ENCODE measurements at regions of chr1 and their contacts with region 1.

Region 1: DNA sequence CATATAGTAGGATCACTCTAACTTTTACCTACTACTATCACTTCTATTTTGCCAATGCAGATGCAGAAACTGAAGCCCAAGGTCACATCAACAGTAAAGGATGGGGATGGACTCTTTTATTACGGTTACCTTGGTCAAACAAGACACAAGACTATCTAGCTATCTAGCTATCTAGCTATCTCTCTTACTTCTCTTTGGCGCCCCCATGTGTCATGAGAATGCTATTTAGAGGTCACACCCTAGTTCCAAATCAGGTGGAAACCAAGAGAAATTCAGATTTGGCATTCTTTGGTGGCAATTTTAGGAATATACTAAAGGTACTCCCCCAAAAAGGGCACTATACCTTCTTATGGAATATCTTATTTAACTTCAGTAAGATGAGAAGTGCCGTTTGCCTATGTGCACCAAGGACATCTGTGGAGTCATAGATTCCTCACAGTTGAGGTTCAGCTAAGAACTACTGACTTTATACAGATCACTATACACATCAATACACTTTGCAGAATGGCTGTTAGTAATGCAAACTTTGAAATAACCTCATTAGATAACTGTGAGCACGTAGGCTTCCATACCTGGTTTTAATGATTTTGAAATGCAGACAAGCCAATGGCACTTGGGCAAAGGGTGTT is 6.7 kb downstream of the ZNF648 start:
- DNase-seq: peak; percentile 8
- ATAC-seq: peak; percentile 92
- H3K4me3 ChIP-seq: no peak overlapping the region
- H3K27ac ChIP-seq: no peak overlapping the region
- H3K4me1 ChIP-seq: no peaks in the 10 kb centered on the region
- H3K27me3 ChIP-seq: peaks cover 3 to 5% of the 10 kb centered on the region in 2 experiments; a peak in 3 of 4 replicates
- CTCF ChIP-seq: peak; percentile 64 to 72 (median 71); a peak in 5 of 6 replicates
- EP300 ChIP-seq: no peak
- POLR2A ChIP-seq: no peak
- RAD21 ChIP-seq: peak; percentile 83

Region 2: GRCh38 chr1:181189691-181190363 is 865.0 kb before region 1 on chr1:
- CTCF ChIA-PET with region 1: interaction called, 4 read pairs
- POLR2A ChIA-PET with region 1: no interaction called
- RAD21 ChIA-PET with region 1: interaction called, 7 read pairs
- SMC1A ChIA-PET with region 1: interaction called, 4 read pairs
- in situ Hi-C with region 1: no loop called
- intact Hi-C with region 1: loop called (anchors 10 kb)
- DNase-seq: no peak
- ATAC-seq: peak; percentile 98
- H3K4me3 ChIP-seq: no peak overlapping the region
- H3K27ac ChIP-seq: no peak overlapping the region
- H3K4me1 ChIP-seq: no peaks in the 10 kb centered on the region
- H3K27me3 ChIP-seq: no peaks in the 10 kb centered on the region
- CTCF ChIP-seq: peak; percentile 95 to 98 (median 97)
- EP300 ChIP-seq: no peak
- POLR2A ChIP-seq: no peak
- RAD21 ChIP-seq: peak; percentile 99

Region 3: DNA sequence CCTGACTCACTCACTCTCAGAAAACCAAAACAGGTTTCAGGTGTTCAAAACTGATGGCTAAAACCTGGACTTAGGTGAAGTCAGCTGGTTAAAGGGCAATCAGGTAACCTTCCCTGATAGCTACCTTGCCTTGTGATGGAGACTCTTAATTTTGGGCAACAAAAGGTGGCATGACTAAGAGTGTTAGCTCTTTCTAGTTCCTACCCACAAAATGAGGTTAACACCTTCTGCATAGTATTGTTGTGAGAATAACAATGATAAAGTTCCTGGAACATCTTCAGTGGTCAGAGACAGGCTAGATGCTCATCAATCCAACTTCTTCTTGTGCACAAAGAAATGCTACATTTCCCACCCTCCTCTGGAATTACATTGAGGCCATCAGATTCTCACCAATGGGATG is 208.1 kb before region 1 on chr1:
- CTCF ChIA-PET with region 1: no interaction called
- POLR2A ChIA-PET with region 1: no interaction called
- RAD21 ChIA-PET with region 1: no interaction called
- SMC1A ChIA-PET with region 1: no interaction called
- in situ Hi-C with region 1: no loop called
- intact Hi-C with region 1: no loop called
- DNase-seq: no peak
- ATAC-seq: no peak
- H3K4me3 ChIP-seq: no peak overlapping the region
- H3K27ac ChIP-seq: no peak overlapping the region
- H3K4me1 ChIP-seq: no peaks in the 10 kb centered on the region
- H3K27me3 ChIP-seq: no peaks in the 10 kb centered on the region
- CTCF ChIP-seq: no peak
- EP300 ChIP-seq: no peak
- POLR2A ChIP-seq: no peak
- RAD21 ChIP-seq: no peak

Region 4: DNA sequence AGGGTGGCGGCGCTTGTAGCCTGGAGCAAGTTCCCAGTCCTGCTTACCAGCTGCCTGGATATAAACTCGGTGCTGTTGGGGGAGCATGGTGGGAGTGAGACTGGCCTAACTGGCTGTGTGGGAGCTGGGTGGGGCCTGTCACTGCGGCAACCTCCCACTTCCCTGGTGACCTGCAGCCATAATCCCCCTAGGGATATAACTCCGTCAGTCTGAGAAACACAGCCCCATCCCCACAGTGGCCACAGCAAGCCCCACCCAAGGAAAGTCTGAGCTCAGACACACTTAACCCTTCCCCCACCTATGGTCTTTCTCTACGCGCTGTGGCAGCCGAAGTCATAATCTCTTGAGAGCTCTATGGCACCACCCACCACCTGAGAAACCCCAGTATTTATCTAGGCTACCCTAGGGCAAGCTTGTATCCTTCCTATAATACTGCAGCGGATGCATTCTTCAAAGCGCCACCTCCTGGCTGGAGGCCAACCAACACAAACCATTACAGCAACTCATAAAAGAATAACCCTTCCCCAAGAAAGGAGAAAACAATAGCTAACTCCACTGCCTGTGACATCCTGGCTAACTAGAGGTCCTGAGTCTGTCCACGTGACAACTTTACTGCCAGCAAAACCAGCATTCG is 50.7 kb before region 1 on chr1:
- CTCF ChIA-PET with region 1: interaction called, 11 read pairs
- POLR2A ChIA-PET with region 1: no interaction called
- RAD21 ChIA-PET with region 1: no interaction called
- SMC1A ChIA-PET with region 1: interaction called, 3 read pairs
- in situ Hi-C with region 1: no loop called
- intact Hi-C with region 1: no loop called
- DNase-seq: no peak
- ATAC-seq: no peak
- H3K4me3 ChIP-seq: no peak overlapping the region
- H3K27ac ChIP-seq: no peak overlapping the region
- H3K4me1 ChIP-seq: no peaks in the 10 kb centered on the region
- H3K27me3 ChIP-seq: no peaks in the 10 kb centered on the region
- CTCF ChIP-seq: no peak
- EP300 ChIP-seq: no peak
- POLR2A ChIP-seq: no peak
- RAD21 ChIP-seq: no peak

Region 5: GRCh38 chr1:182029379-182030331 is 25.2 kb before region 1 on chr1:
- CTCF ChIA-PET with region 1: interaction called, 58 read pairs
- POLR2A ChIA-PET with region 1: interaction called, 4 read pairs
- RAD21 ChIA-PET with region 1: interaction called, 9 read pairs
- SMC1A ChIA-PET with region 1: interaction called, 4 read pairs
- in situ Hi-C with region 1: no loop called
- intact Hi-C with region 1: no loop called
- DNase-seq: peak; percentile 83
- ATAC-seq: peak; percentile 97
- H3K4me3 ChIP-seq: peak overlapping the region; percentile 83
- H3K27ac ChIP-seq: peak overlapping the region; percentile 66
- H3K4me1 ChIP-seq: no peaks in the 10 kb centered on the region
- H3K27me3 ChIP-seq: no peaks in the 10 kb centered on the region
- CTCF ChIP-seq: peak; percentile 20 to 44 (median 30); a peak in 3 of 6 replicates
- EP300 ChIP-seq: no peak; a peak in 1 of 4 replicates
- POLR2A ChIP-seq: peak; percentile 91
- RAD21 ChIP-seq: 0 out of 2 replicates have a peak, but pooled peaks have one; percentile 8

Region 6: GRCh38 chr1:182035097-182035782 is 19.6 kb before region 1 on chr1:
- CTCF ChIA-PET with region 1: interaction called, 58 read pairs
- POLR2A ChIA-PET with region 1: no interaction called
- RAD21 ChIA-PET with region 1: no interaction called
- SMC1A ChIA-PET with region 1: interaction called, 10 read pairs
- in situ Hi-C with region 1: no loop called
- intact Hi-C with region 1: no loop called
- DNase-seq: no peak
- ATAC-seq: peak; percentile 61
- H3K4me3 ChIP-seq: no peak overlapping the region
- H3K27ac ChIP-seq: no peak overlapping the region
- H3K4me1 ChIP-seq: no peaks in the 10 kb centered on the region
- H3K27me3 ChIP-seq: no peaks in the 10 kb centered on the region
- CTCF ChIP-seq: peak; percentile 27 to 54 (median 43); a peak in 5 of 6 replicates
- EP300 ChIP-seq: no peak
- POLR2A ChIP-seq: no peak
- RAD21 ChIP-seq: 0 out of 2 replicates have a peak, but pooled peaks have one; percentile 14

Region 7: GRCh38 chr1:182069028-182069466 is 14.2 kb after region 1 on chr1:
- CTCF ChIA-PET with region 1: interaction called, 20 read pairs
- POLR2A ChIA-PET with region 1: interaction called, 3 read pairs
- RAD21 ChIA-PET with region 1: interaction called, 3 read pairs
- SMC1A ChIA-PET with region 1: no interaction called
- in situ Hi-C with region 1: no loop called
- intact Hi-C with region 1: no loop called
- DNase-seq: no peak
- ATAC-seq: peak; percentile 81
- H3K4me3 ChIP-seq: no peak overlapping the region
- H3K27ac ChIP-seq: no peak overlapping the region
- H3K4me1 ChIP-seq: no peaks in the 10 kb centered on the region
- H3K27me3 ChIP-seq: peaks cover 0 to 2% of the 10 kb centered on the region in 2 experiments; a peak in 2 of 4 replicates
- CTCF ChIP-seq: peak; percentile 39 to 68 (median 44)
- EP300 ChIP-seq: no peak
- POLR2A ChIP-seq: no peak
- RAD21 ChIP-seq: no peak

Region 8: DNA sequence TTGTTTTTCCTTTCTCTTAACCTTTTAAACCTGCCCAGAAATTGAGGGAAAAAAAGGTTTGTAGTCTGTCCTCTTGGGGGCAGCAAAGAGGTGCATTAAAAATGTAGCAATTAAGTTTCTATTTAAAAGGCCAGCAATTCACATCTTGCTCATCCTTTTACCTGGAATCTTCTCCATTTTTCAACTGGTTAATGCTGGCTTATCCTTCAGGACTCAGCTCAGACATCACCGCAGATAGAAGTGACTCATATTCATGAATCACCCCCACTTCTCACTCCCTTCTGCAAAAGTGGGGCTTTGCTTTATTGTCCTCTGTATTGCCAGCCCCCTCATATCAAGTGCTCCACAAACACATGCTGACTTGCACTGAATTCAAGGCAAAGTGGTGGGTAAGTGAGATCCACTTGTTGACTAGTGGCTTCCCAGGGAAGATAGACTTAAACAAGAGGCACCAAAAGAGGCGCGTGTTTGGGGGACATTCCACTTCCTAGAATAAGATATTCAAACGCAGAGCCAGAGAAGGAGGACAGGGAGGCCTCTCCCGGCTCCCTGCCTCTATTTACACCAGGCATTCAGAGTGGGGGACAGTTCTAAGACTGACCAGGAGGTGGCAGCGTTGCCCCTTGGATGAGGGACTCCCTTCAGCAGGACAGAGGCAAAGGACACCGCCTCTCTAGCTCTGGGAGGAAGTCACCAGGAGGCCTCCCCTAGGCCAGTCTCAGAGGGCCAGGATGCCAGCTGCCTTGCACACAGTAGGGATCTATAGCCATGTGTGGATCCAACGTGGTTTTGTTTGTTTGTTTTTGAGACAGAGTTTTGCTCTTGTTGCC is 29.9 kb after region 1 on chr1:
- CTCF ChIA-PET with region 1: interaction called, 16 read pairs
- POLR2A ChIA-PET with region 1: no interaction called
- RAD21 ChIA-PET with region 1: interaction called, 8 read pairs
- SMC1A ChIA-PET with region 1: interaction called, 6 read pairs
- in situ Hi-C with region 1: no loop called
- intact Hi-C with region 1: no loop called
- DNase-seq: no peak
- ATAC-seq: peak; percentile 94
- H3K4me3 ChIP-seq: no peak overlapping the region
- H3K27ac ChIP-seq: no peak overlapping the region
- H3K4me1 ChIP-seq: no peaks in the 10 kb centered on the region
- H3K27me3 ChIP-seq: no peaks in the 10 kb centered on the region
- CTCF ChIP-seq: peak; percentile 67 to 75 (median 74)
- EP300 ChIP-seq: no peak
- POLR2A ChIP-seq: no peak
- RAD21 ChIP-seq: peak; percentile 89

Measured in GM12878 (cell line).